ENCODE measurements at regions of chr15 and their contacts with region 1.

Region 1: GRCh38 chr15:34006381-34006780 is 32.6 kb downstream of the AVEN start:
- DNase-seq: no peak
- H3K4me3 ChIP-seq: no peak overlapping the region
- CTCF ChIP-seq: no peak

Region 2: GRCh38 chr15:33354411-33354810 is 652.0 kb before region 1 on chr15:
- CTCF ChIA-PET with region 1: no interaction called
- POLR2A ChIA-PET with region 1: no interaction called
- DNase-seq: no peak
- H3K4me3 ChIP-seq: no peak overlapping the region
- CTCF ChIP-seq: no peak

Region 3: DNA sequence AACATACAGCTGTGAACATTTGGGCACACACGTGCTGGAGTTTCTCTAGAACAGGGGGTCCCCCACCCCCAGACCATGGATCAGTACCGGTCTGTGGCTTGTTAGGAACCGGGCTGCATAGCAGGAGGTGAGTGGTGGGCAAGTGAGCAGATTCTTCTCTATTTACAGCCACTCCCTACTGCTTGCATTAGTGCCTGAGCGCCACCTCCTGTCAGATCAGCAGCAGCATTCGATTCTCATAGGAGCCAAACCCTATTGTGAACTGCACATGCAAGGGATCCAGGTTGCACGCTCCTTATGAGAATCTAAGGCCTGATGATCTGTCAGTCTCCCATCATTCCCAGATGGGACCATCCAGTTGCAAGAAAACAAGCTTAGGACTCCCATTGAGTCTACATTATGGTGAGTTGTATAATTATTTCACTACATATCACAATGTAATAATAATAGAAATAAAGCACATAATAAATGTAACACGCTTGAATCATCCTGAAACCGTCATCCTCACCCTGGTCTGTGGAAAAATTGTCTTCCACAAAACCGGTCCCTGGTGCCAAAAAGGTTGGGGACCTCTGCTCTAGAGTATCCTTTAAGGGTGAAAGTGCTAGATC is 12.3 kb before region 1 on chr15:
- CTCF ChIA-PET with region 1: interaction called, 13 read pairs
- POLR2A ChIA-PET with region 1: no interaction called
- DNase-seq: no peak
- H3K4me3 ChIP-seq: no peak overlapping the region
- CTCF ChIP-seq: peak; percentile 64

Region 4: GRCh38 chr15:34271493-34271892 is 265.1 kb after region 1 on chr15:
- CTCF ChIA-PET with region 1: no interaction called
- POLR2A ChIA-PET with region 1: no interaction called
- DNase-seq: peak; percentile 41
- H3K4me3 ChIP-seq: no peak overlapping the region
- CTCF ChIP-seq: no peak

Measured in AG04449 (cell line).